ENCODE measurements at regions of chr6 and their contacts with region 1.

Region 1: DNA sequence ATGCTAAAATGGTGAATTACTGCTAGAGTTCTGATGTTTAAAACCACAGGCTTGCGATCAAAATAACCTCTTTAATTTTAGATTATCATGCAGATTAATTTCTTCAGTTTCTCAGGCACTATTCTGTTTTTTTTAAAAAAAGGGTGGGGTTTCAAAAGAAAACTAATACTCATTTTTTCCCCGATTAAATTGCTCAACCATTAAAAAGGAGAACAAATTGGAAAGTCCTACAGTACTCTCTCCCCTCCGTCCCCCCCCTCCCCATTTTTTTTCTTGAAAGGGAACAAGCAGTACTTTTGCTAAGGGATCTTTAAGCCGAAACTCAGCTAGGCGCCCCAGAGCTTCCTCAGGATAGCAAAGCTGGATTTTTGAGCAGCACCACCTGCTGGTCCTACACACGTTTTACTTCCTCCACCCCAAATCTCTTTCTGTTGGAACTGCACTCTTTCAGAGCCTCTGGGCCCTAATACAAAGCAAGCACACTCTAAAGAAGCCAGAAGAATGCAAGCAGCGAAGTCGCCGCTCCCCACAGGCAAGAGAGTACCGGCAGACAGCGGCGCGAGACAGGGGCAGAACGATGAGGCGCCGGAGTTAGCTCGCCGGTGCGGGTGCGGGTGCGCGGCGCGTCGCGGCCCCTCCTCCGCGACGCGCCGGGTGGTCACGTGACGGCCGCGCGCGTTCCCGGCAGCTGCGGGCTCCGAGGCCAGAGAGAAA is at the start of gene RNF146:
- DNase-seq: peak; percentile 93
- H3K4me3 ChIP-seq: peak within 1 kb of the TSS; percentile 78 to 98 (median 90)
- H3K27ac ChIP-seq: peak within 1 kb of the TSS; percentile 99 to 100 (median 100)
- H3K4me1 ChIP-seq: peaks cover 0 to 38% (median 9%) of the 10 kb centered on the region in 4 donors
- H3K27me3 ChIP-seq: no peaks in the 10 kb centered on the region
- CTCF ChIP-seq: peak; percentile 69 to 82 (median 76)
- EP300 ChIP-seq: no peak
- POLR2A ChIP-seq: no peak
- total RNA-seq, gene RNF146: 66.2 to 83.4 (median 74.1) TPM

Region 2: DNA sequence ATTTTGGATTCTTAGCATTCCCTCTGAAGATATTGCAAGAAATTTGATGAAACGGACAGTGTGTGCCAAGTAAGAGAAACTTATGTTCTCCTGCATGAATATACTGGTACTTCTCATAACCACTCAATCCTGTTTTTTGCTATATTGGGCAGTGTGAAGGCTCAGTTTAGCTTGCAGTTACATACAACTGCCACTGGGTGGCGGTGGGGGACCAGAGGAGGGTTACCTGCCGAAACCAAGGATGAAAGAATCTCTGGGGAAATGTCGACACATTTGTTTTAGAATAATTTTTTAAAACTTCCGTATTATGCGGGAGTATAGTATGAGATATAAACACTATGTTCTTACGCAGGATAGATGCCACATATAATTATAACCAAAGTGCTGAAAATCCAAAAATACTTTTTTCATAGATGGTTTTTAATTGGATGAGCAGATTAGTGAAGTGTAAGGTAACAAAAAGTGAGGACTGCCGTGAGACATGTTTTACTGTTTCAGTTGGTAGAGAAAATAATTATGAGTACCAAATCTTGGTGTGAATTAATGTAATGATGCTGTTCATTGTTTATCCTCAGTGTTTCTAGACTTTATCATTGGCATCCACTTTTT is 1270.3 kb before region 1 on chr6:
- intact Hi-C with region 1: loop called (anchors 10 kb)
- DNase-seq: peak; percentile 76
- H3K4me3 ChIP-seq: peak overlapping the region in 1 of 4 donors; percentile 14
- H3K27ac ChIP-seq: no peak overlapping the region
- H3K4me1 ChIP-seq: peaks cover 0 to 22% (median 15%) of the 10 kb centered on the region in 4 donors
- H3K27me3 ChIP-seq: no peaks in the 10 kb centered on the region
- CTCF ChIP-seq: peak; percentile 55 to 95 (median 88)
- EP300 ChIP-seq: no peak
- POLR2A ChIP-seq: no peak

Region 3: DNA sequence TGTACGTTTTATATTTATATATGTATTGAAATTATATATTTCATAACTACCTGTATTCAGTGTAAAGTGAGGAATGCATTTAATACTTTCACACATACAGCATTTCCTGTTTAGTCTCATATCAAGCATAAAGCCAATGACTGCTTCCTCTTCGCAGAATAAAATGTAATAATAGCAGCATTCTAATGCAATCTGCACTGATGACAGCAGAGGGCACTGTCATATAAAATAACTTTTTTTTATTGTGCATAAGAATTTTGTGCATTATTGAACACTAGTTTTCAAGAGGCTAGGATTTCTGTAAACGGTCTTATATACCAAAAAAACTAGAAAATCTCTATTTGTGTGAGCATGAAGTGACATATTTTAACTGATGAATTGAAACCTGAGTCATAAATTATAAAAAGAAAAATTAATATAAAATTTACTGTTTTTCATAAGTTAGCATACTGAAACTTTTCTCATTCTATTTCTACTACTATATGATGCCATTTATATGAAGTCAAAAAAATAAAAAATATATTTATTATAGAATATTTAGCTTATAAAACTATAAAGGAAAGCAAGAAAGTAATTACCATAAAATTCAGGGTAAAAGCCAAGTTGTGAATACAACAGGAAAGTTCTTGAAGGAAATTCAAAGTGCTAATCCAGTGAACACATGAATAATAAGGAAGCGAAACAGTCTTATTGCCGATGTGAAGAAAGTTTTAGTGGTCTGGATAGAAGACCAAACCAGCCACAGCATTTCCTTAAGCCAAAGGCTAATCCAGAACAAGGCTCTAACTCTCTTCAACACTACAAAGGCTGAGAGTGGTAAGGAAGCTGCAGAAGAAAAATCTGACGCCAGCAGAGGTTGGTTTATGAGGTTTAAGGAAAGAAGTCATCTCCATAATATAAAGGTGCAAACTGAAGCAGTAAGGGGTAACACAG is 36.7 kb after region 1 on chr6:
- intact Hi-C with region 1: no loop called
- DNase-seq: no peak
- H3K4me3 ChIP-seq: no peak overlapping the region
- H3K27ac ChIP-seq: no peak overlapping the region
- H3K4me1 ChIP-seq: peaks cover 0 to 50% (median 42%) of the 10 kb centered on the region in 4 donors
- H3K27me3 ChIP-seq: no peaks in the 10 kb centered on the region
- CTCF ChIP-seq: peak; percentile 62 to 70 (median 66)
- EP300 ChIP-seq: no peak
- POLR2A ChIP-seq: no peak

Region 4: DNA sequence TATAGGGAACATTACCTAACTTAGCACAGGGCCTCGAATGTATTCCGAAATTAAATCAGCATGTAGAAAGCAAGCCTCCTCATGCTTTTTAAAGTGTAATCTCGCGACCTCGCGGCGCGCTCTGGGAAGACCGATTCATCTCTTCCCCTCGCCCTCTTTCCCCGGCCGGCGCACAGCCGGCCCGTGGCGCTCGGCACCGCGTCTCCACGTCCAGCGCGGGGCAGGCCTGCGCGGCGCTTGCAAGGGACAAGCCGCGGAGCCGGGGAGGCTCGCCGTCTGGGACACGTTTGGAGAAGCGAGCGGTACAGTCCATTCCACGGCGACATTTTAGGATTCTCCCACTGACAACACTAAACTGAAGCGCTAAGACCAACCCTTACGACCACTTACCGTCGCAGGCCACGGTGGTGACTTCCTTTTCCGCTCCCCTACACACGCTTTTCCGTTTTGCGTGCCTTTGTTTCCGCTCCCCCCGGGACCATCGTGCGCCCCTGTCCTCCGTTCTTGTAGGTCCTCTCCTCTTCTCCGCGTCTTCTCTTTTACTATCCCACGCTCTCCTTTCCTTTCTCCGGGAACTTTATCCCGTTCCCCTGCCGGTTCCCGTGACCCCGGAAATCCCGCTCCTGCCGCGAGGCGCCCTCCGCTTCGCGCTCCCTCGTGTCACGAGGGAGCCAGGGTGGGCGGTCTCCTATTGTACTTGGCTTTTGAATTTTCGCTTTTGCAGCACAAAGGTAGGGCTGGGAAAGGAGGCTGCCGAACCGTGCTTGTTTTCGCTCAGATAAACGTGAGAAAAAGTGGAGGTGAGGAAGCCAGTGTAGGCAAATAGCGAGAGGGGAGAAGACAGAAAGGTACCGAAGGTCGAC is 76.8 kb after region 1 on chr6 and contains the start of gene ECHDC1:
- intact Hi-C with region 1: loop called (anchors 2 kb)
- DNase-seq: peak; percentile 79
- H3K4me3 ChIP-seq: peak within 1 kb of the TSS; percentile 63 to 83 (median 76)
- H3K27ac ChIP-seq: peak within 1 kb of the TSS; percentile 83 to 91 (median 87)
- H3K4me1 ChIP-seq: peaks cover 0 to 48% (median 44%) of the 10 kb centered on the region in 4 donors
- H3K27me3 ChIP-seq: no peaks in the 10 kb centered on the region
- CTCF ChIP-seq: no peak
- EP300 ChIP-seq: no peak
- POLR2A ChIP-seq: no peak
- total RNA-seq, gene ECHDC1: 77.3 to 97.1 (median 83.5) TPM